ENCODE measurements at regions of chr21 and their contacts with region 1.

Region 1: GRCh38 chr21:25421327-25422028 is 185.8 kb downstream of the MRPL39 start:
- DNase-seq: peak; percentile 59
- H3K4me3 Mint-ChIP-seq: peak overlapping the region; percentile 68
- H3K27ac Mint-ChIP-seq: peak overlapping the region; percentile 92
- H3K4me1 Mint-ChIP-seq: peaks cover 43% of the 10 kb centered on the region
- H3K27me3 Mint-ChIP-seq: no peaks in the 10 kb centered on the region

Region 2: GRCh38 chr21:25405984-25406383 is 15.5 kb before region 1 on chr21:
- intact Hi-C with region 1: no loop called
- DNase-seq: no peak
- H3K4me3 Mint-ChIP-seq: no peak overlapping the region
- H3K27ac Mint-ChIP-seq: no peak overlapping the region
- H3K4me1 Mint-ChIP-seq: peaks cover 22% of the 10 kb centered on the region
- H3K27me3 Mint-ChIP-seq: no peaks in the 10 kb centered on the region

Region 3: DNA sequence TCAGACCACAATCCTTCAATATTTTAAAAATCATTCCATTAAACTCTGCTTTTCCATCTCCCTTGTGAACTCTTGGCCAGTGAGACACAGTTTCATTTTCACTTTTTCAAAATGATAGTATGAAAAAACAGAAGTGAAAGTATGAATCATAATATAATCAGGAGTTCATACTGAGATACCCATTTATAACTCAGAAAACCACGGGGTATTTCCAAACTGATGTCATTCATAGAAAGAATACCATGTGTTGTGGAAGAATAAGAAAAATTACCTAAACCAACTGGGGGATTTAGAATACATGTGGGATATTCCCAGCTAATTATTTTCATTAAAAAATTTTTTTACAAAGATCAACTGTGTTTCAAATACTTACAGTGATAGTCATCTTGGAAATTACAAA is 35.9 kb after region 1 on chr21:
- intact Hi-C with region 1: loop called (anchors 1 kb)
- DNase-seq: no peak
- H3K4me3 Mint-ChIP-seq: peak overlapping the region; percentile 58
- H3K27ac Mint-ChIP-seq: peak overlapping the region; percentile 84
- H3K4me1 Mint-ChIP-seq: peaks cover 50% of the 10 kb centered on the region
- H3K27me3 Mint-ChIP-seq: no peaks in the 10 kb centered on the region

Region 4: DNA sequence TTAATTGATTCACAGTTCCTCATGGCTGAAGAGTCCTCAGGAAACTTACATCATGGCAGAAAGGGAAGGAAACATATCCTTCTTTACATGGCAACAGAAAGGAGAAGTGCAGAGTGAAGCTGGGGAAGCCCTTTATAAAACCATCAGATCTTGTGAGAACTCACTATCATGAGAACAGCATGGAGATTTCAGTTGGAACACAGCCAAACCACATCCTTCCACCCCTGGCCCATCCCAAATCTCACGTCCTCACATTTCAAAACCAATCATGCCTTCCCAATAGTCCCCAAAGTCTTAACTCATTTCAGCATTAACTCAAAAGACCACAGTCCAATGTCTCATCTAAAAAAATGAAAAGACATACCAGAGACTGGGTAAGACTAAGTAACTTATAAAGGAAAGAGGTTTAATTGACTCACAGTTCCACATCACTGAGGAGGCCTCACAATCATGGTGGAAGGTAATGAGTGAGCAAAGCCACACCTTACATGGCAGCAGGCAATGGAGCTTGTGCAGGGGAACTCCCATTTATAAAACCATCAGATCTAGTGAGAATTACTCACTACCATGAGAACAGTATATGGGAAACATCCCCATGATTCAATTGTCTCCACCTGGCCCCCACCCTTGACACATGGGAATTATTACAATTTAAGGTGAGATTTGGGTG is 80.7 kb after region 1 on chr21:
- intact Hi-C with region 1: loop called (anchors 1 kb)
- DNase-seq: no peak
- H3K4me3 Mint-ChIP-seq: no peak overlapping the region
- H3K27ac Mint-ChIP-seq: peak overlapping the region; percentile 92
- H3K4me1 Mint-ChIP-seq: peaks cover 40% of the 10 kb centered on the region
- H3K27me3 Mint-ChIP-seq: no peaks in the 10 kb centered on the region

Region 5: DNA sequence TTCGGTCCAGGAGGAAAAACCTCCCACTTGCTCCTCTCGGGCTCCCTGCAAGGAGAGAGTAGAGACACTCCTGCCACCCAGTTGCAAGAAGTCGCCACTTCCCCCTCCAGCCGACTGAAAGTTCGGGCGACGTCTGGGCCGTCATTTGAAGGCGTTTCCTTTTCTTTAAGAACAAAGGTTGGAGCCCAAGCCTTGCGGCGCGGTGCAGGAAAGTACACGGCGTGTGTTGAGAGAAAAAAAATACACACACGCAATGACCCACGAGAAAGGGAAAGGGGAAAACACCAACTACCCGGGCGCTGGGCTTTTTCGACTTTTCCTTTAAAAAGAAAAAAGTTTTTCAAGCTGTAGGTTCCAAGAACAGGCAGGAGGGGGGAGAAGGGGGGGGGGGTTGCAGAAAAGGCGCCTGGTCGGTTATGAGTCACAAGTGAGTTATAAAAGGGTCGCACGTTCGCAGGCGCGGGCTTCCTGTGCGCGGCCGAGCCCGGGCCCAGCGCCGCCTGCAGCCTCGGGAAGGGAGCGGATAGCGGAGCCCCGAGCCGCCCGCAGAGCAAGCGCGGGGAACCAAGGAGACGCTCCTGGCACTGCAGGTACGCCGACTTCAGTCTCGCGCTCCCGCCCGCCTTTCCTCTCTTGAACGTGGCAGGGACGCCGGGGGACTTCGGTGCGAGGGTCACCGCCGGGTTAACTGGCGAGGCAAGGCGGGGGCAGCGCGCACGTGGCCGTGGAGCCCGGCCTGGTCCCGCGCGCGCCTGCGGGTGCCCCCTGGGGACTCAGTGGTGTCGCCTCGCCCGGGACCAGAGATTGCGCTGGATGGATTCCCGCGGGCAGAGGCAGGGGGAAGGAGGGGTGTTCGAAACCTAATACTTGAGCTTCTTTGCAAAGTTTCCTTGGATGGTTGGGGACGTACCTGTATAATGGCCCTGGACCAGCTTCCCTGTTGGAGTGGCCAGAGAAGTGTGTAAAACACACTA is 140.5 kb after region 1 on chr21:
- intact Hi-C with region 1: loop called (anchors 1 kb)
- DNase-seq: peak; percentile 68
- H3K4me3 Mint-ChIP-seq: peak overlapping the region; percentile 91
- H3K27ac Mint-ChIP-seq: peak overlapping the region; percentile 99
- H3K4me1 Mint-ChIP-seq: peaks cover 54% of the 10 kb centered on the region
- H3K27me3 Mint-ChIP-seq: no peaks in the 10 kb centered on the region

Region 6: GRCh38 chr21:25607151-25608043 is 185.9 kb after region 1 on chr21 and contains the start of gene MRPL39:
- intact Hi-C with region 1: loop called (anchors 1 kb)
- DNase-seq: peak; percentile 84
- H3K4me3 Mint-ChIP-seq: peak within 1 kb of the TSS; percentile 100
- H3K27ac Mint-ChIP-seq: peak within 1 kb of the TSS; percentile 98
- H3K4me1 Mint-ChIP-seq: peaks cover 26% of the 10 kb centered on the region
- H3K27me3 Mint-ChIP-seq: no peaks in the 10 kb centered on the region
- total RNA-seq, gene MRPL39: 53.1 and 54.4 TPM in 2 replicates

Region 7: DNA sequence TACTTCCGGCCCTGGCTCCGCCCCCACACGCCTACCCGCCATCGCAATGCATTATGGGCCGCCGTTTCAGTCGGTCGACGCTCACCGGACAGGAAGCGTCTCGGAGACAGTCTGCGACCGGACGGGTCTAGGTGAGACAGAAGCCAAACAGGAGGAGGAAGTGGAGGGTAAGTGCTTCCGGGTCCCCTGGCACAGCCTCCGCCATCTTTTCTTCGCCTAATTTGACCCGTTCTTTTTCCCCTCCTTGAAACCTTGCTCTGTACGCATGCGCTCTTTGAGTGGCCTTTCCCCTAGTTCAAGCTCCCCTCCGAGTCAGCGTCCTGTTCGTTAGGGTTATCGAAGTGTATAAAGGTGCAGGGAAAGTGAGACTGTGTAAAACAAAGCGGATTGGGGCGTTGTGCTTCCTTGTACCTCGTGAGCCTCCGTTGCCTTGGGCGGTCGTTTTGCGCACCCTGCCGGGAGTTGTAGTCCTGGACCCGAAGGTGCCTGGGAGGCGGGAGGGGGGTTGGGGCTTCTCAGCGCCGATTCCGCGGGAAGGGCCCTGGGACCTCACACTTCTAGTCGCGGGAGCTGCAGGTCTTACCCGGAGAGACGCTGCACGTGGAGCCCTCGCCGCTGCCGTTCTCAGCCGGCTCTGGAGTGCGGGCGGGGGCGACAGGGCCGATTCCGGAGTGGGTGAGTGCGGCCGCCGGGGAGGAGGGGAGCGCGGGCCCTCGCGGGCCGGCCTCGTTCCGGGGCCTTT is 313.6 kb after region 1 on chr21 and contains the starts of genes ATP5PF and GABPA:
- intact Hi-C with region 1: loop called (anchors 10 kb)
- DNase-seq: peak; percentile 97
- H3K4me3 Mint-ChIP-seq: peak within 1 kb of the TSS; percentile 99
- H3K27ac Mint-ChIP-seq: peak within 1 kb of the TSS; percentile 100
- H3K4me1 Mint-ChIP-seq: peaks cover 34% of the 10 kb centered on the region
- H3K27me3 Mint-ChIP-seq: no peaks in the 10 kb centered on the region
- total RNA-seq, gene ATP5PF: 156 and 163 TPM in 2 replicates
- total RNA-seq, gene GABPA: 22.7 and 26.3 TPM in 2 replicates